Adrenal gland (tissue), 19 donors: ENCODE measurements at regions of chr6 and their contacts with region 1.

Region 1: DNA sequence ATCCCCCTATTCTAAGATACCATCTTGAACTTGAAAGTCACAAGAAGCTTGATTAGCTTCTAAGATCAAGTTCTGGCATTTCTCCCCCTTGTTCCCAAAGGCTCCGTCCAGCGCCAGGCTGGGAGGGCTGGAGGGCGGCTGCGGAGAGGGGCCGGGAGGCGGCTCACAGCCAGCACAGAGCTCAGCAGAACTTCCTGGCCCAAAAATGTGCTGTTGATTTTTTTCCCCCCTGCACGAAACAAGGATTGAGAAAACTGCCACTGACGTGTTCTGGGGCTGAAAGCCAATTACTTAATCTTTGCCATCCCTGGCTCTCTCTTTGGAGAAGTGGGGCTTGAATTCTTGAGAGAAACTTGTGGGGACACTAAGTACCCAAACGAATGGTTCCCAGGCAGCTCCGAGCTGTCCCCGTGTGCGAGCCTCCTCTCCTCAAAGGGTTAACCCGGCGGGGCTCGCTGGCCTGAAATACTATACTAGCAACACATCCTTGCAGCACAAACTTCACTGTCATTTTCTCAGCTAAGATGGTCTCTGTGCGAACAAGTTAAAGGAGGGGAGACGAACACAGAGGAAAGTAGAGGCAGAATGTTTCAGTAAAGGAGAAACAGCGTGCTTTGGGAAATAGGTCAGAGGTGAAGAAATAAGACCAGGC is 452 bp downstream of the TRAF3IP2 start:
- DNase-seq: peak; percentile 63 to 85 (median 80)
- H3K4me3 ChIP-seq: peak overlapping the region in 3 of 4 donors; percentile 52 to 70 (median 59)
- H3K27ac ChIP-seq: peak overlapping the region; percentile 95 to 97 (median 96)
- H3K4me1 ChIP-seq: peaks cover 38 to 55% of the 10 kb centered on the region in 2 donors
- H3K27me3 ChIP-seq: no peaks in the 10 kb centered on the region
- CTCF ChIP-seq: no peak
- POLR2A ChIP-seq: peak in 1 of 2 donors; percentile 7

Region 2: GRCh38 chr6:111483736-111484632 is 121.2 kb before region 1 on chr6:
- intact Hi-C with region 1: loop called (anchors 2 to 10 kb)
- DNase-seq: peak; percentile 91 to 98 (median 97)
- H3K4me3 ChIP-seq: peak overlapping the region in 3 of 4 donors; percentile 53 to 96 (median 81)
- H3K27ac ChIP-seq: peak overlapping the region; percentile 97 to 99 (median 99)
- H3K4me1 ChIP-seq: peaks cover 12 to 42% of the 10 kb centered on the region in 2 donors
- H3K27me3 ChIP-seq: no peaks in the 10 kb centered on the region
- CTCF ChIP-seq: peak in 2 of 6 experiments; percentile 15
- POLR2A ChIP-seq: peak; percentile 81 to 92

Region 3: GRCh38 chr6:111759836-111760785 is 154.9 kb after region 1 on chr6:
- intact Hi-C with region 1: no loop called
- DNase-seq: no peak
- H3K4me3 ChIP-seq: no peak overlapping the region
- H3K27ac ChIP-seq: peak overlapping the region in 2 of 5 donors; percentile 50 to 75
- H3K4me1 ChIP-seq: peaks cover 0 to 18% of the 10 kb centered on the region in 2 donors
- H3K27me3 ChIP-seq: no peaks in the 10 kb centered on the region
- CTCF ChIP-seq: no peak
- POLR2A ChIP-seq: no peak

Region 4: GRCh38 chr6:112004201-112005012 is 399.2 kb after region 1 on chr6:
- intact Hi-C with region 1: loop called in 1 of 2 experiments (anchors 5 kb)
- DNase-seq: no peak
- H3K4me3 ChIP-seq: no peak overlapping the region
- H3K27ac ChIP-seq: no peak overlapping the region
- H3K4me1 ChIP-seq: peaks cover 0 to 4% of the 10 kb centered on the region in 2 donors
- H3K27me3 ChIP-seq: no peaks in the 10 kb centered on the region
- CTCF ChIP-seq: no peak
- POLR2A ChIP-seq: no peak